IMR-90 (cell line): ENCODE measurements at regions of chr10 and their contacts with region 1.

Region 1: GRCh38 chr10:100046021-100046486 is 35.6 kb downstream of the CPN1 start:
- DNase-seq: peak; percentile 81
- ATAC-seq: peak; percentile 92
- H3K4me3 ChIP-seq: no peak overlapping the region
- H3K27ac ChIP-seq: no peak overlapping the region
- H3K4me1 ChIP-seq: peaks cover 4% of the 10 kb centered on the region
- H3K27me3 ChIP-seq: no peaks in the 10 kb centered on the region
- CTCF ChIP-seq: peak; percentile 93
- POLR2A ChIP-seq: no peak
- RAD21 ChIP-seq: peak; percentile 94

Region 2: DNA sequence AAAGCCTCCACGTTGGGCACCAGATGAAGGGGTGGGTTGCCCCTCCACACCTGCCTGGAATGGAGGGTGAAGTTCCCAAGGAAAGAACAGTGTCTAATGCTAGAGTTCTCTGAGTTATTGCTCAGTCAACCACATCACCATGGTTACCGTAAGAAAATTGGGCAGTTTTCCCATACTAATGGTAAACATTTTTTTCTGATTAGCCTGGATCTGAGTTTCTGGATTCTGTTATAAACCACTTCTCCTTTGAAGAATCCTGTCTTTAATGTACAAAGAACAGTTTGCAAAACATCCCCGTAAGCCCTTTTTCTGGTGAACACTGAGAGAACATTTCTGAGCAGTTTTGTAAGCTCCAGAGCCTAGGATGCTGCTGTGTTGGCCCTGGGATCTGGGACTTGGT is 218.1 kb before region 1 on chr10:
- CTCF ChIA-PET with region 1: no interaction called
- POLR2A ChIA-PET with region 1: no interaction called
- dilution Hi-C with region 1: no loop called
- in situ Hi-C with region 1: no loop called
- intact Hi-C with region 1: no loop called
- DNase-seq: peak; percentile 72
- ATAC-seq: peak; percentile 61
- H3K4me3 ChIP-seq: no peak overlapping the region
- H3K27ac ChIP-seq: no peak overlapping the region
- H3K4me1 ChIP-seq: peaks cover 8% of the 10 kb centered on the region
- H3K27me3 ChIP-seq: no peaks in the 10 kb centered on the region
- CTCF ChIP-seq: no peak
- POLR2A ChIP-seq: no peak
- RAD21 ChIP-seq: no peak

Region 3: GRCh38 chr10:99845837-99846382 is 200.1 kb before region 1 on chr10:
- CTCF ChIA-PET with region 1: interaction called, 31 read pairs
- POLR2A ChIA-PET with region 1: no interaction called
- dilution Hi-C with region 1: no loop called
- in situ Hi-C with region 1: loop called (anchors 5 kb)
- intact Hi-C with region 1: loop called (anchors 1 kb)
- DNase-seq: peak; percentile 94
- ATAC-seq: peak; percentile 94
- H3K4me3 ChIP-seq: no peak overlapping the region
- H3K27ac ChIP-seq: no peak overlapping the region
- H3K4me1 ChIP-seq: no peaks in the 10 kb centered on the region
- H3K27me3 ChIP-seq: no peaks in the 10 kb centered on the region
- CTCF ChIP-seq: peak; percentile 96
- POLR2A ChIP-seq: no peak
- RAD21 ChIP-seq: peak; percentile 93

Region 4: GRCh38 chr10:99906470-99906869 is 139.6 kb before region 1 on chr10:
- CTCF ChIA-PET with region 1: interaction called, 5 read pairs
- POLR2A ChIA-PET with region 1: no interaction called
- dilution Hi-C with region 1: no loop called
- in situ Hi-C with region 1: no loop called
- intact Hi-C with region 1: loop called (anchors 2 kb)
- DNase-seq: peak; percentile 96
- ATAC-seq: peak; percentile 85
- H3K4me3 ChIP-seq: no peak overlapping the region
- H3K27ac ChIP-seq: peak overlapping the region; percentile 23; the same call in 1 of the 2 replicates
- H3K4me1 ChIP-seq: peaks cover 7% of the 10 kb centered on the region; the same call in 1 of the 2 replicates
- H3K27me3 ChIP-seq: no peaks in the 10 kb centered on the region
- CTCF ChIP-seq: peak; percentile 51
- POLR2A ChIP-seq: no peak
- RAD21 ChIP-seq: peak; percentile 60

Region 5: DNA sequence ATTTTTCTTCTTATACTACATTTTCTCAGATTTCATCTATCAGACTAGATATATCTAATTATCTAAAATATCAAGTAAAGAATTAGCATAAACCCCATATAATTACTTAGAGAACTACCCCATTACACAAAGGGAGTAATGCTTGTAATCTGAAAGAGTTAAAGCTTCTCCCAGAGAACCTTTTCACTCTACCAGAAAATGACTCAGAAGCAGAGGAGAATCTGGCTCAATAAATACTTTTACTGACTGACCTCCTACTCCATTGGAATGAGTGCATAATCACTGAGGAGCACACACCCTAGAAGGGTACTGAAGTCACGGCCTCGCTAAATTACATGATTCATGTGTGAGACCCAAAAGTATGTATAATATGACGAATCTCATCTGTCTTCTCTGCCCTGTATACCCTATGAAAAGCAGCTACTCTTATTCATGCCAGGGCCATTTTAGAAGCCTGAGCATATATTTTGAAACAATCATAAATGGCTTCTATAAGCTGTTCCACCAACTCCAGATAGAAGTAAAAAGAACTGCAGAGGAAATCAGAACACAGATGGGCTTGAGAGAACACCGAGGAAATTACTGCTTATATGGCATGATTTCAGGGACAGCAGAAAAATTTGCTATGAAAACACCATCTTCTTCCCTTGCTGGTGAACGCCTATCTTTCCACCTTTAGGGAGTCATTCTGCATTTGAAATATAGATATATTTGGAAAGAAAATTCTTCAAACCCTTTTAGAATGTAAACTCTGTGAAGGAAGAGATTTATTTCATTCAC is 69.0 kb before region 1 on chr10:
- CTCF ChIA-PET with region 1: interaction called, 5 read pairs
- POLR2A ChIA-PET with region 1: no interaction called
- dilution Hi-C with region 1: no loop called
- in situ Hi-C with region 1: no loop called
- intact Hi-C with region 1: loop called (anchors 1 kb)
- DNase-seq: peak; percentile 92
- ATAC-seq: peak; percentile 94
- H3K4me3 ChIP-seq: no peak overlapping the region
- H3K27ac ChIP-seq: 0 out of 2 replicates have a peak overlapping the region, but pooled peaks have one; percentile 30
- H3K4me1 ChIP-seq: peaks cover 14% of the 10 kb centered on the region
- H3K27me3 ChIP-seq: no peaks in the 10 kb centered on the region
- CTCF ChIP-seq: no peak
- POLR2A ChIP-seq: no peak
- RAD21 ChIP-seq: 0 out of 2 replicates have a peak, but pooled peaks have one; percentile 17

Region 6: DNA sequence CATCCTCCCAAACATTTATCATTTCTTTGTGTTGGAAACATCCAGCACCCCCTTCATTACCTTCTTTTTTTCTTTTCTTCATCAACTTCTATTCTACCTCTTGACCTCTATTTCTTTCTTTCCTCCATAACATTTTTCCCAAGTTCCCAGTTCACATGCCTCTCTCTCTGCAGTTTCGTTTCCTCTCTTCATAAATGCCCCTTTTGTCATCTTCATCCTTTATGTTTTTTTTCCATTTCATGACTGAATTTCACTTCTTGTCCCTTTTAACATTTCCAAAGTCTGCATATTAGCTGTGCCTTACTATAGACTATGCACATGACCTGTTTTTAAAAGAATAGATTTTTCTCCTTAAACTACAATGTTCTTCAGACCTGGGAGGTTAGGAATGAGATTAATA is 11.9 kb after region 1 on chr10:
- CTCF ChIA-PET with region 1: interaction called, 12 read pairs
- POLR2A ChIA-PET with region 1: no interaction called
- dilution Hi-C with region 1: no loop called
- in situ Hi-C with region 1: no loop called
- intact Hi-C with region 1: no loop called
- DNase-seq: no peak
- ATAC-seq: no peak
- H3K4me3 ChIP-seq: no peak overlapping the region
- H3K27ac ChIP-seq: no peak overlapping the region
- H3K4me1 ChIP-seq: no peaks in the 10 kb centered on the region
- H3K27me3 ChIP-seq: peaks cover 14% of the 10 kb centered on the region
- CTCF ChIP-seq: no peak
- POLR2A ChIP-seq: no peak
- RAD21 ChIP-seq: no peak